ENCODE measurements at regions of chr1 and their contacts with region 1.

Region 1: DNA sequence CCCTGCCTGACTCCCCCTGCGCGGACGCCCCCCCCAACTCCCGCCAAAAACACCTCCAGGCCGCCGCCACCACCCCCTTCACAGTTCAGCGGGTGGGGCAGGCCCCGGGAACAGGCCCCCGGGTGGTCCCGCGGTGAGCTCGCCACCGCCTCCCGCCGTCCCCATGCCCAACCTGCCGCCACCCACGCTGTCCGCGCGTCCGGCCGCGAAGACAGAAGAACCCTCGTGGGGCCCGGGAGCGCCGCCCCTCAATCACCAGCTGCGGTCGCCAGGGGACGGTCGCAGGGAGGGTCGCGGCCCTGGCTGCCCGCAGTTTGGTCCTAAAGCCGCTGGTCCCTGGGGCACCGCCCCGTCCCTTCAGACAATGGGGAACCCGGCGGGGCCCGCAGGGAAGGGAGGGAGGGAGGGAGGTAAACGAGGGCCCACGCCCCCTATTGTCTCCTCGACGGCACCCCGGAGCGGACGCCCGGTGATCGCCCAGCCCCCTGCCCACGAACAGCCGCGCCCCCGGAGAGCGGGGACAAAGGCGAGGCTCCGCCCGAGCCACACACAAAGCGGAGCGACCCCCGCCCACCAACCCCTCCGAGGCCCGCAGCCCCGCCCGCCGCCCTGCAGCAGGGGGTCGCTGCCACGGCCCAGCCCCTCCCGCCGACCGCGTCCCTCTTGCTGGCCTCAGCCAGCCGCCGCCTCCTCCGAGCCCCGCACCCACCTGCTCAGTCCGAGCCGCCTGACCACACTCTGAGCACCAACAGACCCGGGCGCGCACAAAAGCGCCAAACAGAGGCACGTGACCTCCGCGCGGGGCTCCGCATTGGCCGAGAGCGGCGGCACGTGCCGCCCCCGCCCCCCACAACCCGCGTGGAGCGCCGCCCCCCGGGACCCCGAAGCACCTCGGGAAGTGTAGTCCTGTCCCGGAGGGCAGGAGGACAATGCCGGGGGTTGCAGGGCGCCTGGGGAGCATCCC is at the start of gene STMN1:
- DNase-seq: peak; percentile 76
- H3K4me3 Mint-ChIP-seq: peak within 1 kb of the TSS; percentile 98
- H3K27ac Mint-ChIP-seq: peak within 1 kb of the TSS; percentile 93
- H3K4me1 Mint-ChIP-seq: peaks cover 49% of the 10 kb centered on the region
- H3K27me3 Mint-ChIP-seq: peaks cover 24% of the 10 kb centered on the region
- total RNA-seq, gene STMN1: 203 and 205 TPM in 2 replicates

Region 2: GRCh38 chr1:25819576-25820246 is 86.3 kb before region 1 on chr1 and contains the start of gene MTFR1L:
- intact Hi-C with region 1: loop called (anchors 1 kb)
- DNase-seq: peak; percentile 93
- H3K4me3 Mint-ChIP-seq: peak within 1 kb of the TSS; percentile 97
- H3K27ac Mint-ChIP-seq: peak within 1 kb of the TSS; percentile 93
- H3K4me1 Mint-ChIP-seq: peaks cover 35% of the 10 kb centered on the region
- H3K27me3 Mint-ChIP-seq: no peaks in the 10 kb centered on the region
- total RNA-seq, gene MTFR1L: 29.3 and 30.0 TPM in 2 replicates

Region 3: DNA sequence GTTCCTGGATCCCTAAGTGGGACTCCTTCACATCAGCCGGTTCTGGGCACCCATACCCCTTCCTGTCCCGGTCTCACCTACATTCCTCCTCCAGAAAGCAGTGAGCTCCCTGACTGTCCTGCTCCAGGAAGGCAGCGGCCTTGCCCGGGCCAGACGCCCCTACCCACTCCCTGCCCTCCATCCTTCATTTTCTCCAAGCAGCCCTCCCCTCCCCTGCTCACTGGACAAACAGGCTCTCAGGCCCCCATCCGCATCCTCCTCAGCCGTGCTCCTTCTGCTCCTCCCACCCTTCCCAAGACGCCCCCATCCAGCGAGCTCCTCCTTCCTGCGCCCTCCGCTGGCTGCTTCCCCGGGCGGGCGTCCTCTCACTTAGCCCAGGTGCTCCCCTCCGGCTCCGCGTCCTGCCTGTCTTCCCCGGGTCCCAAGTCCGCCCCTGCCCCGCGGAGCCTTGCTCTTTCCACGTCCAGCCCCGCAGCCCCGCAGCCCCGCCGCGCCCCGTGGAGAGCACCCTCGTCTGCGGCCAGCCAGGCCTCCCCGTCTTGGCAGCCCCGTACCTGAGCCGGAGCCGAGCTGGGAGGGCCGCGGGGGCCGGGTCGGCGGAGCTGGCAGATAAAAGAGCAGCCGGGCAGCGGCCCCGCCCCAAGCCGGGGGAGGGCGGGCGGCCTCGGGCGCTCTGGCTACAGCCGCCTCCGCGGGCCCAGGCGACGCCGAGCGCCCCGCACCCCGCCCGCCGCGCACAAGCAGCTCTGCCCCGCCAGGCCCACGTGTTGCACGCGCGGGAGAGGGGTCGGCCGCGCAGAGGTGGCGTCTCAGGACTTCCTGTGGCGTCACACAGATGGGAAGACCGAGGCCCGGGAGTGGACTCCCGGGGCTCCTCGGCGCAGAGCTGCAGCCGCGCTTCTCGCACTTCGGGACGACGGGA is 30.8 kb before region 1 on chr1 and contains the start of gene PAQR7:
- intact Hi-C with region 1: loop called (anchors 1 kb)
- DNase-seq: peak; percentile 50
- H3K4me3 Mint-ChIP-seq: peak within 1 kb of the TSS; percentile 84
- H3K27ac Mint-ChIP-seq: peak within 1 kb of the TSS; percentile 70
- H3K4me1 Mint-ChIP-seq: no peaks in the 10 kb centered on the region
- H3K27me3 Mint-ChIP-seq: peaks cover 12% of the 10 kb centered on the region
- total RNA-seq, gene PAQR7: 5.8 and 6.1 TPM in 2 replicates

Region 4: GRCh38 chr1:25922056-25922969 is 16.4 kb after region 1 on chr1:
- intact Hi-C with region 1: loop called (anchors 2 kb)
- DNase-seq: peak; percentile 38
- H3K4me3 Mint-ChIP-seq: peak overlapping the region; percentile 75
- H3K27ac Mint-ChIP-seq: peak overlapping the region; percentile 23
- H3K4me1 Mint-ChIP-seq: peaks cover 29% of the 10 kb centered on the region
- H3K27me3 Mint-ChIP-seq: peaks cover 41% of the 10 kb centered on the region

Region 5: DNA sequence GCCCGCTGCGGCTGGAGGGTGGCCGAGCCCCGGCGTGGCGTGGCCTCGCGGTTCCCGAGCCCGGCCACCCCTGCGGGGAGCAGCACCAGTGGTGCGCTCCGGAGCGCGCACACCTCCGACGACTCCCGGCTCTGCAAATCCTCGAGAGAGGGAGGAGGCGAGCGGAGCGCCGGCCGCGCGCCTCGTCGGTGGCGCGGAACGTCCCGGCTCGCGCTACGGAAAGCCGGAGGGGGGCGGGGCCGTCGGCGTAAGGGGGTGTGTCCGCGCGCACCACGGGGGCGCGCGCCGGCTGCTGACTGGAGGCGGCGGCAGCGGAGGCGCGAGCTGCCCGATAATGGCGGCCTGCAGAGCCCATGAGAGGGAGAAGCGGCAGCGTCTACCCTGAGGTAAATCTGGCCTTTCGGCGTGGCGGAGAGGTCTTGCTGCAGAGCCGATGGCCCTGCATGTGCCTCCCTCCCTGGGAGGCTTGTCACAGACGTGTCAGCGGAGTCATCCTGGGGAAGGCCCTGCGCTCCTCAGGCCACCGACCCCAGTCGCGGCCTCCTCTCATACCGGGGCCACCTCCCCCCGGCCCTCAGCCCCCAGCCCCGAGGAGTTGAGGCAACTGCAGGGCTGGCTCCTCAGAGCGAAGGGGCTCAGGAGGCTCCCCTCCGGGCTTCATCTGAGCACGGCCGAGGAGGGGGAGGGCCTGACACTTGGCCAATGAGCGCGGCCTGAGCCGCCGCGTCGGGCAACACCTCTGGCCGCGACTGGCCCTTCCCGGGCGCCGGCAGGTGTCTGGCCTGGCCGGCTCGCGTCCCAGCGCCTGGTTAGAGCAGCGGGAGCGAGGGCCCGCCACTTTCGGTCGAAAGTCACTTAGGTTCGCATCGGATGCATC is 205.8 kb after region 1 on chr1 and contains the start of gene PDIK1L:
- intact Hi-C with region 1: loop called (anchors 5 kb)
- DNase-seq: peak; percentile 91
- H3K4me3 Mint-ChIP-seq: peak within 1 kb of the TSS; percentile 96
- H3K27ac Mint-ChIP-seq: peak within 1 kb of the TSS; percentile 92
- H3K4me1 Mint-ChIP-seq: peaks cover 36% of the 10 kb centered on the region
- H3K27me3 Mint-ChIP-seq: no peaks in the 10 kb centered on the region
- total RNA-seq, gene PDIK1L: 15.5 and 18.9 TPM in 2 replicates

Region 6: DNA sequence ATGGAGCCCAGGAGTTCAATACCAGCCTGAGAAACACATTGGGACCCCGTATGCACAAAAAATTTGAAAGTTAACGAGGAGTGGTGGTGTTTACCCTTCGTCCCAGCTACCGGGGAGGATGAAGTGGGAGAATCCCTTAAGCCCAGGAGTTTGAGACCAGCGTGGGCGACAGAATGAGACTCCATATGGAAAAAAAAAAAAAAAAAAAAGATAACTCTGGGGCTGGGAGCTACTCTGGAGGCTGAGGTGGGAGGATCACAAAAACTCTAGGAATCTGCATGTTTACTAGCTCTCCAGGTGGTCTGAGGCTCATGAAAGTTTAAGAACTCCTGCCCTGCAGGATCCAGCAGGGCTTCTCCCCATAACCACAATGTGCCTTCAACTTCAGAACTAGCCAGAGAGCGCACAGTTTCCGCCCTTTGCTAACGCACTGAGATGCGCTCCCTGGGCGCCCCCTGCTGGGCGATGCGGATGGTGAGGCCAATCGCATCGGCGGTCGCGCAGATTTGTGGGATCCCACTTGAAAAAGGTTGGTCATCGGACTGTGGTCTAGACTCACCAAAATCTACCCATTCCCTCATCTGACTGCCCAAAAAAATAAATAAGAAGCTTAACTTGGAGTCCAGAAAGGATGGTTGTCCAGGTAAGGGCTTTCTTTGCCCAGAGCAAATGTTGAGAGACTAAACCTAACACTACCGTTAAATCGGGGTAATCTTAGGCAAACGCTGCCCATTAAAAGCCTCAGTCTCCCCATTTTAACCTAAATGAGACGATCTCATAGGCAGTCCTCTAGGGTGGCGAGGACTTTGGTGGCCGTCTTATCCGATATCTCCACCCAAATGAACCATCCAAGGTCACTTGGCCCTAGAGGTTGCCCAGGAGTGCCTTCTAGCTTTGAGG is 457.8 kb after region 1 on chr1:
- intact Hi-C with region 1: no loop called
- DNase-seq: peak; percentile 74
- H3K4me3 Mint-ChIP-seq: no peak overlapping the region
- H3K27ac Mint-ChIP-seq: no peak overlapping the region
- H3K4me1 Mint-ChIP-seq: peaks cover 46% of the 10 kb centered on the region
- H3K27me3 Mint-ChIP-seq: peaks cover 39% of the 10 kb centered on the region

Measured in activated T-helper 1 cell treated with anti-CD3 and anti-CD28 coated beads, Interleukin-12 subunit alpha, Interleukin-12 subunit beta, Interleukin-2, Interleukin-4 antibody, amounts not matched to agents 30 ng/mL and 10 ng/mL and 1 ng/mL, durations not matched to agents 14 hours and 24 hours and 36 hours (primary cell).